IMR-90 (cell line): ENCODE measurements at regions of chr4 and their contacts with region 1.

Region 1: DNA sequence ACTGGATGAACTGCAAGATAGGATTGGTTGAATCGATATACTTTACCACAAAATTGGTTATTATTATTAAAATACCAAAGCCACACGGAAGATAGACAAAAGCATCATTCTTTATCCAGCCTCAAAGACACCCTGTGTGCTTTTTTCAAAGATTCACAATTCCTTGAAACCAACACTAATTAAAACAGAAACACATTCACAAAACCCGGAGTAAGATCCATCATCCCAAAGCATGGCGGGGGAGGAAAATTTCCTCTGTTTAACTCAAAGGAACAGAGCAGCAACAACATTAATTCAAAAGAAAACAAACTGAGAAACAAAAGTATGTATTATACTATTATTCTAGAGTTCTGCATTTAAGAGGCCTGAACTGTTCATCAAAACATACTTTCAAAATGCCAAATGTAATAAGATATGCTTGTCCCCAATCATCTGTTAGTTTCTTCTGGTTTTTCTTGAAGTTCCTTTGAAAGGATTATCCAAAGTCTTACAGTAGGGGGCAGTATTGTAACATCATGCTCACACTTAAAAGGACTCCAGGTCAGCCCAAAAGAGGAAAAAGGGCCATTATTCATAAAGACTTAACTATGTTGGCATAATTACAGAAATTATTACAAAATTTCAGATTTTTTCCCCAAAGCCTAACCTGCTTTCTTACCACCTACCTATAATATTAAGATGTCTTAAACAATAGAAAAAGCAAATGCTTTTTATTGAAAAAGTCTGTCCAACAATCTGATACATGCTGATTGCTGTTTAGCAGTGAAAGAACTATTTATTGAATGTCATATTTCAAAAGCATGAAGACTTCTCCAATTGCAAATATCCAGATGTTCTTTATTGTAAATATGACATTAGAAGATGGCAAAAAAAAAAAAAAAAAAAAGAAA is 168.7 kb downstream of the SCFD2 start:
- DNase-seq: peak; percentile 90
- ATAC-seq: peak; percentile 82
- H3K4me3 ChIP-seq: peak overlapping the region; percentile 22; the same call in 1 of the 2 replicates
- H3K27ac ChIP-seq: peak overlapping the region; percentile 56; the same call in 1 of the 2 replicates
- H3K4me1 ChIP-seq: no peaks in the 10 kb centered on the region
- H3K27me3 ChIP-seq: no peaks in the 10 kb centered on the region
- CTCF ChIP-seq: peak; percentile 80
- POLR2A ChIP-seq: no peak
- RAD21 ChIP-seq: peak; percentile 85

Region 2: GRCh38 chr4:53377319-53378170 is 180.4 kb after region 1 on chr4 and contains the start of gene FIP1L1:
- CTCF ChIA-PET with region 1: no interaction called
- POLR2A ChIA-PET with region 1: no interaction called
- dilution Hi-C with region 1: no loop called
- in situ Hi-C with region 1: no loop called
- intact Hi-C with region 1: loop called (anchors 1 kb)
- DNase-seq: peak; percentile 87
- ATAC-seq: peak; percentile 96
- H3K4me3 ChIP-seq: peak within 1 kb of the TSS; percentile 93
- H3K27ac ChIP-seq: peak within 1 kb of the TSS; percentile 95
- H3K4me1 ChIP-seq: no peaks in the 10 kb centered on the region; the same call in 1 of the 2 replicates
- H3K27me3 ChIP-seq: no peaks in the 10 kb centered on the region
- CTCF ChIP-seq: no peak
- POLR2A ChIP-seq: peak; percentile 74
- RAD21 ChIP-seq: no peak
- total RNA-seq, gene FIP1L1: 37.5 and 48.9 TPM in 2 replicates

Region 3: DNA sequence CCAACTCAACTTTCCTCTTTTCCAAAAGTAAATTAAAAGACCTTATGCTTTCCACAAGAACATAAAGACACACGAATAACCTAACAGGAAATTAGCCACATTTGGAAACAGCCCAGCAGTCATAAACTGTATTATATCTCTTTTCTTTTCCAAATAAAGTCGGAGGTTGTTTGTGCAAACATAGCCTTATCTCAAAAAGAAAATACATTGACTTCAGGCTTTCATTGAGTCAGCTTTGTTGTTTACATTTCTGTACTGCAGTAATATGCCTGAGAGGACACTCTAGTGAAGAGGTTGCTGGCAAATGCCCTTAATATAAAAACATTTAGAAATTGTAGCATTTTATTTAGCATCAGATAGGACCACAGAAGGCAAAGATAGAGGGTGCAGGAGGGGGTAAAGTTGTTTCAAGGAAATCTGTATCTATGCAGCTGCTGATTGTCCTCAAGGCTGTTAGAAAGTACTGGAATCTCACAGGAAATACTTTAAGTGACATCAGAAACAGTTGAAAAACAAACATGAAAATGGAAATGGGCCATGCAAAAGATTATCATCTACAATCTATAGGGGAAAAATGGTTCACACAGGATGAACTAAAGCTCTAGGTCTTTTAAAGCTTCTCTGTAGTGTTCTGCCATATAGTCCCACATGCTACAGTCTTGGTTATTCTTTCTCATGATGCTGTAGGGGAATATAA is 379.7 kb after region 1 on chr4:
- CTCF ChIA-PET with region 1: no interaction called
- POLR2A ChIA-PET with region 1: no interaction called
- dilution Hi-C with region 1: no loop called
- in situ Hi-C with region 1: no loop called
- intact Hi-C with region 1: loop called (anchors 5 kb)
- DNase-seq: peak; percentile 90
- ATAC-seq: peak; percentile 76
- H3K4me3 ChIP-seq: no peak overlapping the region
- H3K27ac ChIP-seq: peak overlapping the region; percentile 100
- H3K4me1 ChIP-seq: peaks cover 32% of the 10 kb centered on the region
- H3K27me3 ChIP-seq: no peaks in the 10 kb centered on the region
- CTCF ChIP-seq: no peak
- POLR2A ChIP-seq: no peak
- RAD21 ChIP-seq: no peak

Region 4: GRCh38 chr4:53763813-53764597 is 566.9 kb after region 1 on chr4:
- CTCF ChIA-PET with region 1: no interaction called
- POLR2A ChIA-PET with region 1: no interaction called
- dilution Hi-C with region 1: no loop called
- in situ Hi-C with region 1: no loop called
- intact Hi-C with region 1: loop called (anchors 5 kb)
- DNase-seq: peak; percentile 89
- ATAC-seq: peak; percentile 82
- H3K4me3 ChIP-seq: no peak overlapping the region
- H3K27ac ChIP-seq: peak overlapping the region; percentile 98
- H3K4me1 ChIP-seq: peaks cover 31% of the 10 kb centered on the region
- H3K27me3 ChIP-seq: no peaks in the 10 kb centered on the region
- CTCF ChIP-seq: no peak
- POLR2A ChIP-seq: no peak
- RAD21 ChIP-seq: no peak

Region 5: DNA sequence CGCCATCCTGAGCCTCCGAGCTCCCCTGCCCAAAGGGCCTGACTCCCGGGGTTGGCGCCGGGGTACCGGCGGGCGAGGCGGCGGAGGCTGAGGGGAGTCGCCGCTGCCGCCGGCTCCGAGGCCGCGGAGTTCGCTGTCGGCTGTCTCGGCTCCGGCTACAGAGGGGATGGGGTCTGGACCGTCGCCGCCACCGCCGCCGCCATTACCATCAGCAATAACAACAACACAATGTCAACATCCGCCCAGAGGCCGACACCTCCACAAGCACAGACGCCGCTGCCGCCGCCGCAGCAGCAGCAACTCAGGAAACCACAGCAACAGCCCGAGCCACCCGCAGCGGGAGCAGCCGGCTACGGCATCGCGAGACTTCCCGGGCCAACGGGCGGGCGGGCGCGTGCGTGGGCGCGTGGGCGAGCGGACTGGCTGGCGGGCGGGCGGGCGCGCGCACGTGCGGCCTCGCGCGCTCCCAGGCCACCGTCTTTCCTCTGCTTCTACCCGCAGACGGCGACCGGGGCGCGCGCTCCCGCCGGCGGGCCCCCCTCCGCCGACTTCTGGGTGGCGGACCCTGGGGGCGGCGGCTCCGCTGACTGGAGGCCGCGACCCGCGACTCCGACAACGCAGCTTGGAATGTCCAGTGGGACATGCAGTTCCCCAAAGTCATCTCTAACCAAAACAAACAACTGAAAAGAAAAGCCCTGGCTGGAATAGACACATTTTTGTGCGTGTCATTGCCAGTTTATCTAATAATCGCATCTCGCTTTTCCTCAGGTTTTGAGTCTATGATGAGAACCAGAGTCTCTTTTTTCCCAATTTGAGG is 867.4 kb after region 1 on chr4 and contains the start of gene CHIC2:
- CTCF ChIA-PET with region 1: no interaction called
- POLR2A ChIA-PET with region 1: no interaction called
- dilution Hi-C with region 1: no loop called
- in situ Hi-C with region 1: no loop called
- intact Hi-C with region 1: loop called (anchors 5 kb)
- DNase-seq: peak; percentile 92
- ATAC-seq: peak; percentile 88
- H3K4me3 ChIP-seq: peak within 1 kb of the TSS; percentile 81
- H3K27ac ChIP-seq: peak within 1 kb of the TSS; percentile 97
- H3K4me1 ChIP-seq: peaks cover 13% of the 10 kb centered on the region; the same call in 1 of the 2 replicates
- H3K27me3 ChIP-seq: no peaks in the 10 kb centered on the region
- CTCF ChIP-seq: no peak
- POLR2A ChIP-seq: peak; percentile 96
- RAD21 ChIP-seq: no peak
- total RNA-seq, gene CHIC2: 26.3 and 65.0 TPM in 2 replicates